GM13977 (cell line): ENCODE measurements at regions of chr22 and their contacts with region 1.

Region 1: DNA sequence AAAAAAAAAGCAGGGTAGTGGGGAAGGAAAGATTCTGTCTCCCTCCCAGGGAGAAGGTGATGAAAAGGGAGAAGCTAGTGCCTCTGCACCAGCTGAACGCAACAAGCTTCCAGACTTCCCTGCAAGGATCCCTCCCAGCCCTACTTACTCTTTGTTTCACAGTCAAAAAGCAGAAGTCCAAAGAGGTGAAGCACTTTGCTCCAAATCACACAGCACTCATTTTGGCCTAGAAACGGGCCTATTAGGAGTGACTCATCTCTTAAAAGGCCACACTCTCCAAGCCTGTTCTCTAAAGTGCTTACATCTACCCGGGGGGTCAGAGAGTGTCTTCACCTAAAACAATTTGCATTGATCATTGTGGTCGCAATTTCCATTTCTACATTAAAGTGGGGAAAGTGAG is 17.7 kb upstream of the GRK3 start:
- DNase-seq: peak; percentile 17
- CTCF ChIP-seq: no peak

Region 2: GRCh38 chr22:25696763-25697667 is 150.3 kb after region 1 on chr22:
- in situ Hi-C with region 1: loop called (anchors 10 kb)
- DNase-seq: no peak
- CTCF ChIP-seq: no peak

Region 3: DNA sequence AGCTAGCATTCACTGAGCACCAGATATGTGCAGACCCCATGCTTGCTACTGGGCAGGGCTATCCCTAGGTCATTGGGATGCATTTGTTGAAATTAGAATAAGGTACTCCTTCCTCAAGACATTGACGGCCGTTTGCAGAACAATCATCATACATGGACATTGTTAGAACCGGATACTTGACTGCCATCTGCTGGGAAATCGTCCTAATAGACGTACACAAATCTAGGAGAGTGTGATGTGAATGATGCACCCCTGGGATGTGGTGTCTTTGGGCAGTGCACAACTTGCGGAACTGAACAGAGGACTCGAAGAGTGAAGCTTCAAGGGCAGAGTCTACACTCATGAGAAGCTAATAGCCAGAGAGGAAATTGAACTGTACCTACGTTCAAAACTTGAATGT is 231.1 kb after region 1 on chr22:
- in situ Hi-C with region 1: no loop called
- DNase-seq: peak; percentile 54
- CTCF ChIP-seq: peak; percentile 32

Region 4: GRCh38 chr22:26174283-26174682 is 627.5 kb after region 1 on chr22:
- in situ Hi-C with region 1: no loop called
- DNase-seq: no peak
- CTCF ChIP-seq: no peak